ENCODE measurements at regions of chr3 and their contacts with region 1.

Region 1: GRCh38 chr3:45043728-45044299 is 17.7 kb downstream of the CLEC3B start:
- DNase-seq: no peak
- ATAC-seq: no peak
- H3K4me3 Mint-ChIP-seq: no peak overlapping the region
- H3K27ac Mint-ChIP-seq: no peak overlapping the region
- H3K4me1 Mint-ChIP-seq: peaks cover 31% of the 10 kb centered on the region
- H3K27me3 Mint-ChIP-seq: peaks cover 30% of the 10 kb centered on the region

Region 2: GRCh38 chr3:45119824-45120614 is 76.2 kb after region 1 on chr3:
- CTCF ChIA-PET with region 1: interaction called, 29 read pairs
- POLR2A ChIA-PET with region 1: interaction called, 5 read pairs
- DNase-seq: no peak
- ATAC-seq: no peak
- H3K4me3 Mint-ChIP-seq: no peak overlapping the region
- H3K27ac Mint-ChIP-seq: peak overlapping the region; percentile 37
- H3K4me1 Mint-ChIP-seq: peaks cover 67% of the 10 kb centered on the region
- H3K27me3 Mint-ChIP-seq: peaks cover 20% of the 10 kb centered on the region

Region 3: GRCh38 chr3:45218578-45219390 is 175.0 kb after region 1 on chr3:
- CTCF ChIA-PET with region 1: interaction called, 386 read pairs
- POLR2A ChIA-PET with region 1: no interaction called
- DNase-seq: no peak
- ATAC-seq: no peak
- H3K4me3 Mint-ChIP-seq: no peak overlapping the region
- H3K27ac Mint-ChIP-seq: no peak overlapping the region
- H3K4me1 Mint-ChIP-seq: peaks cover 11% of the 10 kb centered on the region
- H3K27me3 Mint-ChIP-seq: peaks cover 51% of the 10 kb centered on the region

Region 4: GRCh38 chr3:45499529-45499928 is 455.7 kb after region 1 on chr3:
- CTCF ChIA-PET with region 1: interaction called, 101 read pairs
- POLR2A ChIA-PET with region 1: no interaction called
- DNase-seq: no peak
- ATAC-seq: no peak
- H3K4me3 Mint-ChIP-seq: no peak overlapping the region
- H3K27ac Mint-ChIP-seq: no peak overlapping the region
- H3K4me1 Mint-ChIP-seq: peaks cover 23% of the 10 kb centered on the region
- H3K27me3 Mint-ChIP-seq: no peaks in the 10 kb centered on the region

Measured in activated CD8-positive, alpha-beta T cell treated with anti-CD3 and anti-CD28 coated beads, Interleukin-2, amount 10 ng/mL, durations not matched to agents 7 days and 5 days (primary cell).